ENCODE measurements at regions of chr13 and their contacts with region 1.

Region 1: GRCh38 chr13:50123862-50124536 is 108.8 kb downstream of the KCNRG start:
- DNase-seq: peak; percentile 44 to 93 (median 64)
- ATAC-seq: peak; percentile 64
- H3K4me3 ChIP-seq: peak overlapping the region; percentile 90
- H3K4me3 Mint-ChIP-seq: peak overlapping the region; percentile 93
- H3K27ac ChIP-seq: peak overlapping the region; percentile 88 to 98
- H3K27ac Mint-ChIP-seq: peak overlapping the region; percentile 94
- H3K4me1 ChIP-seq: peaks cover 44% of the 10 kb centered on the region
- H3K4me1 Mint-ChIP-seq: peaks cover 58% of the 10 kb centered on the region
- H3K27me3 ChIP-seq: peaks cover 13 to 14% of the 10 kb centered on the region in 2 experiments
- H3K27me3 Mint-ChIP-seq: peaks cover 23% of the 10 kb centered on the region
- CTCF ChIP-seq: no peak

Region 2: GRCh38 chr13:49792550-49793324 is 331.3 kb before region 1 on chr13 and contains the start of gene KPNA3:
- CTCF ChIA-PET with region 1: no interaction called
- POLR2A ChIA-PET with region 1: interaction called, 35 read pairs
- intact Hi-C with region 1: loop called (anchors 2 to 5 kb)
- DNase-seq: peak; percentile 90 to 98 (median 94)
- ATAC-seq: peak; percentile 89
- H3K4me3 ChIP-seq: peak within 1 kb of the TSS; percentile 84
- H3K4me3 Mint-ChIP-seq: peak within 1 kb of the TSS; percentile 100
- H3K27ac ChIP-seq: peak within 1 kb of the TSS; percentile 83 to 92
- H3K27ac Mint-ChIP-seq: peak within 1 kb of the TSS; percentile 95
- H3K4me1 ChIP-seq: peaks cover 22% of the 10 kb centered on the region
- H3K4me1 Mint-ChIP-seq: peaks cover 41% of the 10 kb centered on the region
- H3K27me3 ChIP-seq: no peaks in the 10 kb centered on the region
- H3K27me3 Mint-ChIP-seq: peaks cover 9% of the 10 kb centered on the region
- CTCF ChIP-seq: no peak
- total RNA-seq, gene KPNA3: 15.7 to 17.3 TPM

Region 3: DNA sequence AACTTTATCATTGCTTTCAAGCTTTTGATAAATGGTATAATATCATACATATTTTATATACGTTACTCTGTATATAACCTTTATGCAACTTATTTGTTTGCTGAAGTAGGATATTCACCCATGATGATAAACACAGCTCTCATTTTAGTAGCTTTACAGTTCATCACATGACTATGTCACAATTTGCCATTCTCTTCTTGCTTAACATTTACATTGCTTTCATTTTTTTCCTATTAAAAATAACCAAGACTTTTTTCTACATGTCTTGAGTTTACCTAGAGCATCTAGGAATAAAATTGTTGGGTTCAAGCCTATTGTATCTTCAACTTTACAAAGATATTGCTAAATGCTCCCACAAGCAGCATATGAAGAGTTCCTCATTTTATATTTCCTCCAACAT is 54.7 kb before region 1 on chr13:
- CTCF ChIA-PET with region 1: no interaction called
- POLR2A ChIA-PET with region 1: interaction called, 10 read pairs
- intact Hi-C with region 1: no loop called
- DNase-seq: no peak
- ATAC-seq: no peak
- H3K4me3 ChIP-seq: no peak overlapping the region
- H3K4me3 Mint-ChIP-seq: no peak overlapping the region
- H3K27ac ChIP-seq: no peak overlapping the region
- H3K27ac Mint-ChIP-seq: no peak overlapping the region
- H3K4me1 ChIP-seq: no peaks in the 10 kb centered on the region
- H3K4me1 Mint-ChIP-seq: peaks cover 13% of the 10 kb centered on the region
- H3K27me3 ChIP-seq: no peaks in the 10 kb centered on the region
- H3K27me3 Mint-ChIP-seq: peaks cover 7% of the 10 kb centered on the region
- CTCF ChIP-seq: no peak

Region 4: GRCh38 chr13:50106559-50106958 is 17.4 kb before region 1 on chr13:
- CTCF ChIA-PET with region 1: interaction called, 3 read pairs
- POLR2A ChIA-PET with region 1: interaction called, 76 read pairs
- intact Hi-C with region 1: no loop called
- DNase-seq: peak in 1 of 14 experiments; percentile 20
- ATAC-seq: peak; percentile 51
- H3K4me3 ChIP-seq: no peak overlapping the region
- H3K4me3 Mint-ChIP-seq: peak overlapping the region; percentile 61
- H3K27ac ChIP-seq: peak overlapping the region in 1 of 2 donors; percentile 64
- H3K27ac Mint-ChIP-seq: peak overlapping the region; percentile 76
- H3K4me1 ChIP-seq: no peaks in the 10 kb centered on the region
- H3K4me1 Mint-ChIP-seq: peaks cover 60% of the 10 kb centered on the region
- H3K27me3 ChIP-seq: no peaks in the 10 kb centered on the region
- H3K27me3 Mint-ChIP-seq: no peaks in the 10 kb centered on the region
- CTCF ChIP-seq: no peak

Region 5: GRCh38 chr13:50365408-50366391 is 241.7 kb after region 1 on chr13:
- CTCF ChIA-PET with region 1: no interaction called
- POLR2A ChIA-PET with region 1: interaction called, 21 read pairs
- intact Hi-C with region 1: no loop called
- DNase-seq: peak in 12 of 14 experiments; percentile 8 to 82 (median 22)
- ATAC-seq: peak; percentile 75
- H3K4me3 ChIP-seq: peak overlapping the region; percentile 33
- H3K4me3 Mint-ChIP-seq: peak overlapping the region; percentile 77
- H3K27ac ChIP-seq: peak overlapping the region; percentile 24 to 80
- H3K27ac Mint-ChIP-seq: peak overlapping the region; percentile 89
- H3K4me1 ChIP-seq: peaks cover 35% of the 10 kb centered on the region
- H3K4me1 Mint-ChIP-seq: peaks cover 43% of the 10 kb centered on the region
- H3K27me3 ChIP-seq: no peaks in the 10 kb centered on the region
- H3K27me3 Mint-ChIP-seq: no peaks in the 10 kb centered on the region
- CTCF ChIP-seq: no peak

Region 6: GRCh38 chr13:50911937-50912795 is 788.2 kb after region 1 on chr13:
- CTCF ChIA-PET with region 1: interaction called, 11 read pairs
- POLR2A ChIA-PET with region 1: interaction called, 102 read pairs
- intact Hi-C with region 1: loop called (anchors 5 to 10 kb)
- DNase-seq: peak; percentile 85 to 95 (median 90)
- ATAC-seq: peak; percentile 46
- H3K4me3 ChIP-seq: peak overlapping the region; percentile 94
- H3K4me3 Mint-ChIP-seq: peak overlapping the region; percentile 90
- H3K27ac ChIP-seq: peak overlapping the region; percentile 22 to 93
- H3K27ac Mint-ChIP-seq: peak overlapping the region; percentile 93
- H3K4me1 ChIP-seq: peaks cover 40% of the 10 kb centered on the region
- H3K4me1 Mint-ChIP-seq: peaks cover 60% of the 10 kb centered on the region
- H3K27me3 ChIP-seq: no peaks in the 10 kb centered on the region
- H3K27me3 Mint-ChIP-seq: no peaks in the 10 kb centered on the region
- CTCF ChIP-seq: peak; percentile 88